Ascending aorta (tissue), 2 donors: ENCODE measurements at regions of chr3 and their contacts with region 1.

Region 1: GRCh38 chr3:194671900-194672808 is at the start of gene LSG1:
- DNase-seq: peak; percentile 44 to 95
- H3K4me3 ChIP-seq: peak within 1 kb of the TSS; percentile 80 to 96
- H3K27ac ChIP-seq: peak within 1 kb of the TSS; percentile 83 to 89
- H3K4me1 ChIP-seq: peaks cover 0 to 10% of the 10 kb centered on the region in 2 donors
- H3K27me3 ChIP-seq: no peaks in the 10 kb centered on the region
- CTCF ChIP-seq: no peak
- total RNA-seq, gene LSG1: 9.4 TPM

Region 2: DNA sequence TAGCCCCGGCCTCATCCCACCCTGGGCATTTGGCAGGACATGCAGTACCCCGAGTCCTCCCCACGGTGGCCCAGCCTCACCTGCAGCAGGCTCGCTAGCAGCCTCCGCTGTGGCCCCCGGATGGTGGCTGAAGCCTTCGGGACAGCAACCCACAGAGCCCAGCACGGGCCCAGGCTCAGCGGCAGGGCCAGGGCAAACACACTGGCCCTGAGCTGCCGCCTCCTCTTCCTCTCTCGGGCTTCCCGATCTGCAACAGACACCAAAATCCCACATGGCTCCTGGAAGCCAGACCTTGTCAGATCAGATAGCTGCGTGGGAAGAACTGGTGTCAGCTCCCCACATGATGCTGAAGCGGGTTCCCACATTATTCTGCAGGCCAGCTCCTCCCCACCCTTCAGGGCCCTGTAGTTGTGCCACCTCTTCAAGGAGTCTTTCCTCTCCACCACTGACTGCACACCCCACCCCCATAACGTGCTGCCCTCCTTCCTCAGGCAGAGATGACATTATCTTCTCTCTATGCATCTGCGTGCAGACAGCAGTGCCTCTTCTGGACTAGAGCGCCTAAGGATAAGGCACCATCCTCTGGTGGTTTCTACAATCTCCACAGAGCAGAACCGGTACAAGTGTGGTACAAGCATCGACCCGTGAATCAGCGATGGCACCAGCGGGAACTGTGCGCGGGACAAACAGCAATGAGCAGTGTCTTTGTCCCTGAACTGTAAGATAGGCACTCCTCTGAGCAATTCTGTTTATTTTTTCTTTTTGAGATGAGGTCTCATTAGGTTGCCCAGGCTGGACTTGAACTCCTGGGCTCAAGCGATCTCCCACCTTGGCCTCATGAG is 48.5 kb before region 1 on chr3:
- intact Hi-C with region 1: no loop called
- DNase-seq: no peak
- H3K4me3 ChIP-seq: no peak overlapping the region
- H3K27ac ChIP-seq: no peak overlapping the region
- H3K4me1 ChIP-seq: no peaks in the 10 kb centered on the region
- H3K27me3 ChIP-seq: no peaks in the 10 kb centered on the region
- CTCF ChIP-seq: no peak

Region 3: DNA sequence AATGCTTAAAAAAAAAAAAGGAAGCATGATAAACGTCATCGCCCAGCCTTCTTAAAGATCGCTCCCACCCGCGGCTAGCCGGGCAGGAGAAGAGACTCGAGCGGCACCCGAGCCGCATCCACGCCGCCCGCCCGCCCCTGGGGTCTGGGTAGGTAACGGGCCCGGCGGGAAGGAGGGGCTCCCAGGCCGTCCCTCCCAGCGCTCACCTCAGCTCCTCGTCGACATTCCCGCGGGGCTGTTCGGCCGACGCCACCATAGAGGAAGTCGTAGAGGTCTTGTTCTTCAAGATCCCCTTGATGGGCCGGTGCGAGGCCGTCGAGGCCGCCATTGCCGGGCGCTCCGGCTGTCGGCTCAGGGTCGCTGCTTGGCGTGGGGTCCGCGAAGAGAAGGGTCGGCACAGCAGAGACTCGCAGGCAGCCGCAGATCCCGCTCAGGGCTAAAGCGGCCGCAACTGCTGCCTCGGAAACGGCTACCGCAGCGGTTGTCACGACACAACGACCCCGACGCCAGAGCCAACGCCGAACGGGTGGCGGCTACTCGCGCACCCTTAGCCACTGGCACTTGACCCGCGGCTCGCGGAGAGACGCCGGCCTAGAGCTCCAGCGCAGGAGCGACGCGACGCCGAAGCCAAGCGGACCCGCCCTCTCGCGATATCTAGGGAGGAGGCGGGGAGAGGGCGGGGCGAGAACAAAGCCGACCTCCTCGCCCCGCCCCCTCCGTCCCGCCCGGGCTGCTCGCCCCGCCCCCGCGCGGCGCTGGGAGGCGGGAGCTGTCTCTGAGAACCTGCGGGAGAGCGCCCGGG is 870.7 kb after region 1 on chr3 and contains the start of gene PPP1R2:
- intact Hi-C with region 1: loop called (anchors 5 kb)
- DNase-seq: peak; percentile 51 to 95
- H3K4me3 ChIP-seq: peak within 1 kb of the TSS; percentile 78 to 83
- H3K27ac ChIP-seq: peak within 1 kb of the TSS; percentile 87 to 93
- H3K4me1 ChIP-seq: peaks cover 21 to 48% of the 10 kb centered on the region in 2 donors
- H3K27me3 ChIP-seq: no peaks in the 10 kb centered on the region
- CTCF ChIP-seq: no peak
- total RNA-seq, gene PPP1R2: 62.3 TPM